ENCODE measurements at regions of chr10 and their contacts with region 1.

Region 1: DNA sequence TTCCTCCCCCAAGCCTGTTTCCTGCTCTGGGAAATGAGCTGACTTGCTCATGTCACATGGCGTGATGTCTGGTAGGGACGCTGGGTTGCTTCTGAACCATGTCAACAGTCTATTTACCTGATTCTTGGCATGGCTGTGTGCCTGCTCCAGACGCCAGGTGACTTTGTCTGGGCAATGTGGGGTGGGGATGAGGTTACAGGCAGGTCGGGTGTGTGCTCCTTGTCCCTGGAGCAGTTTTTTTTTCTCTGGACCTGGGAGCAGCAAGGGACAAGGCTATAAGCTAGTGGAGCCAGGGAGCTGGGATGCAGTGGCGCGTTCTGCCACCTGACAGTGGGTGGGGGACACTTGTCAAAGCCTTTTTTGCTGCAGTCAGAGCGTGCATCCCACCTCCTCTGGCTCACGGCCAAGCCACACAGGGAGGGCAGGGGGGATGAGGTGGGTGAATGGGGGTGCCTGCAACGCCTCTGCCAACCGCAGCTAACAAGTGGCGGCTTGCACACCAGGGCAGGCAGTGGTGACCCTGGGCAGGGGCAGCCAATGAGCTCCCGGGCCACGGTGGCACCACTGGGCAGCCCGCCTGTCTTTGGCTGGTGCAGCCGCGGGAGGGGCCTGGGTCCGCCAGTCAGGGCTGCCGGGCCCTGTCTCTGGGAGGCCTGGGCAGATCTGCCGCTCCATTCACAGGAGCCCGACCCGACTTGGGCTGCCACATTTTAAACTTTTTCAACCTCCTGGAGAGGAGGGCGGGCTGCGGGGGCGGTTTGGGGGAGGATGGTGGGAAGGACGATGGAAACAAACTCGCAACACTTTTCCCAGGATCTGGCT is 22.9 kb downstream of the DNAJB12 start:
- DNase-seq: peak; percentile 98
- H3K4me3 Mint-ChIP-seq: peak overlapping the region; percentile 76
- H3K27ac Mint-ChIP-seq: peak overlapping the region; percentile 100
- H3K4me1 Mint-ChIP-seq: peaks cover 87% of the 10 kb centered on the region
- H3K27me3 Mint-ChIP-seq: peaks cover 2% of the 10 kb centered on the region

Region 2: DNA sequence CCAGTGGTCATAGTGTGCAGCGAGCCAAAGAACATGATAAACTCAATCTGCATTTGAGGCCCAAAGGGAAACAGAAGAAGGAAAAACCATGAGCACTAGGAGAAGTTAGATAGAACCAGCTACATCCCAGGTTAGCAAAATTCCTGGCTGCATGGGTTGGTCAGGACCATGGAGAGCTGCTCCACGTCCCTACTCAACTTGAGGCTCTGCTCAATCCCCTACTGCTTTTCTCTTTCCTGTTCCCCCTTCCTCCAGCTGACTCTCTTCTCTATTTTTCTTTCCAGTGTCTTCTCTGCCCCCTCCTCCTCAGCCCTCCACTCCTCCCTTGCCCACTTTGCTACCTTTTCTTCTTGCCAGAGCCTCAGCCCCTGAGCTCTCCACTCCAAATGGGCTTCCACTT is 536.6 kb before region 1 on chr10:
- CTCF ChIA-PET with region 1: no interaction called
- intact Hi-C with region 1: no loop called
- DNase-seq: peak; percentile 42
- H3K4me3 Mint-ChIP-seq: no peak overlapping the region
- H3K27ac Mint-ChIP-seq: no peak overlapping the region
- H3K4me1 Mint-ChIP-seq: peaks cover 14% of the 10 kb centered on the region
- H3K27me3 Mint-ChIP-seq: no peaks in the 10 kb centered on the region

Region 3: GRCh38 chr10:71957546-71958275 is 374.1 kb before region 1 on chr10:
- CTCF ChIA-PET with region 1: interaction called, 5 read pairs
- intact Hi-C with region 1: loop called (anchors 5 kb)
- DNase-seq: no peak
- H3K4me3 Mint-ChIP-seq: no peak overlapping the region
- H3K27ac Mint-ChIP-seq: no peak overlapping the region
- H3K4me1 Mint-ChIP-seq: no peaks in the 10 kb centered on the region
- H3K27me3 Mint-ChIP-seq: peaks cover 9% of the 10 kb centered on the region

Region 4: DNA sequence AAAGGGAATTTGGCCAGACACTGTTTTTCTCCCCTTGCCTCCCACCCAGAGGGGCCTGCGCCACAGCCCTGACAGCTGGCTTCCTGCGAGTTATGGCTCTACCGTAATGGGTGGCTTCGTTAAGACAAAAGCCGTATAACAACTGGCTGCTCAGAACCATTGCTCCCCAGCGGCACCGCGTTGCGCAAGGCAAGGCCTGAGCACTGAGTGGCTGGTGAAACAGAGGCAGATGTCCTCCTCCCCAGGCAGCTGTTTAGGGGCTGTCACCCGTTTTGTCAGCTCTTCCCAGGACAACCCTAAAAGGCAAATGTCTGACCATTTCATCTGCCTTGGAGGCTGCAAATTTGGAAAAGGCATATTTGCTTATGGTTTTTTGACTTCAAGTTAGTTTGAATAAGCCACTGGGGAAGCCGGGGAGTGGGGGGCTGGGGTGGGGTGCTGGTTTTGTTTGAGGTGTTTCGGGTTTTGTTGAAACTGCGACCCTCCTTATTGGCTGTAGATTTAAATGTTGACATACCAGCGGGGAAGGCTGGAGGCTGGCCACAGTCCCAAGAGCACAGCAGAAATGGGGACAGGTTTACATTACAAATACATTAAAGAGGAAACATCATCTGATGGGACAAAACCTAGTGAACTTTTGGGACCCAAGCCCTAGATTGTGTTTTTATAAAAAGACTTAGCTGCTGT is 242.8 kb before region 1 on chr10:
- CTCF ChIA-PET with region 1: interaction called, 5 read pairs
- intact Hi-C with region 1: loop called (anchors 1 kb)
- DNase-seq: peak; percentile 81
- H3K4me3 Mint-ChIP-seq: peak overlapping the region; percentile 99
- H3K27ac Mint-ChIP-seq: peak overlapping the region; percentile 99
- H3K4me1 Mint-ChIP-seq: peaks cover 63% of the 10 kb centered on the region
- H3K27me3 Mint-ChIP-seq: no peaks in the 10 kb centered on the region

Region 5: DNA sequence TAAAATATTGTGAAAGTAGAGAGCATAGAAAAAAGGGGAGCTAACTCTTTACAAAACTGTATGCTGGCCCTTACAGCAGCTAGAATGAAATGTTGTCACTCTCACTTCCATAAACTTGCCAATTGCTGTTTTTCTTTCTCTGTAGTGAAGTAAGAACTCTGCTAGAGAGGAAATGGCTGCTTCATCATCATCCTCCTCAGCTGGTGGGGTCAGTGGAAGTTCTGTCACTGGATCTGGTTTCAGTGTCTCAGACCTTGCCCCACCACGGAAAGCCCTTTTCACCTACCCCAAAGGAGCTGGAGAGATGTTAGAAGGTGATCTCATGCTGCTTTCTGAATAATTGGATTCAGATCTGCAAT is 108.1 kb before region 1 on chr10:
- CTCF ChIA-PET with region 1: interaction called, 43 read pairs
- intact Hi-C with region 1: loop called (anchors 1 kb)
- DNase-seq: peak; percentile 44
- H3K4me3 Mint-ChIP-seq: no peak overlapping the region
- H3K27ac Mint-ChIP-seq: peak overlapping the region; percentile 89
- H3K4me1 Mint-ChIP-seq: peaks cover 63% of the 10 kb centered on the region
- H3K27me3 Mint-ChIP-seq: no peaks in the 10 kb centered on the region

Region 6: GRCh38 chr10:72273410-72274212 is 58.2 kb before region 1 on chr10 and contains the start of gene DDIT4:
- CTCF ChIA-PET with region 1: interaction called, 195 read pairs
- intact Hi-C with region 1: loop called (anchors 2 kb)
- DNase-seq: peak; percentile 99
- H3K4me3 Mint-ChIP-seq: peak within 1 kb of the TSS; percentile 96
- H3K27ac Mint-ChIP-seq: peak within 1 kb of the TSS; percentile 98
- H3K4me1 Mint-ChIP-seq: peaks cover 34% of the 10 kb centered on the region
- H3K27me3 Mint-ChIP-seq: no peaks in the 10 kb centered on the region
- total RNA-seq, gene DDIT4: 684 to 689 TPM

Region 7: DNA sequence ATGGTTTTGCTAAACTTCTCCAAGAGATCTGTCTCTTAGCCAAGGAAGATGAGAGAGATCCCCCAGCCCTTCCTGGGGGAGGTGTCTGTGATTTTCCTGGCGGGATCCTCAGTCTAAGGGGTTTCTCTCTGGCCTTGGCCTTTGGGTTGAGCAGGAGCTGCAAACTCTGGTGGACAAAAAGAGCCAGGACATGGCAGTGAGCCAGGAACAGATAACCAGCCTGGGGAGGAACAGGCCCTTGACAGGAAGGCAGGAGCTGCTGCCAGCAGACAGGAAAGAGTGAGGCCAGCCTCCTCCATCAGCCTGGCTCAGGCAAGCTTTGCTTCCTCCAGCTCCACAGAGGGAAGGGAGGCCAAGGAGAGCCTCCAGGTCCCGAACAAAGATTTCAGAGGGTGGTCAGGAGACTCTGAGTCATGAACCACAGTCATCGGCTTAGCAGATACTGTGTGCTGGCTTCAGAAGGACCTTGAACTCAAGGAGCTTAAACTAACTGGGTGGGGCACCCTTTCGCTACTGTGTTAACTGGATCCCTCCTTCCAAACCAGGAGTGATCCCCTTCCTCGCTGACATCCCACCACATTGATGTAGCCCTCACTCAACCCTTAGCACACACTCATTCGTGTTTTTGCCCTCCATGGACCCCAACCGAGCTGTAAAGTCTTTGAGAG is 23.4 kb before region 1 on chr10:
- CTCF ChIA-PET with region 1: interaction called, 8 read pairs
- intact Hi-C with region 1: loop called (anchors 1 kb)
- DNase-seq: peak; percentile 73
- H3K4me3 Mint-ChIP-seq: no peak overlapping the region
- H3K27ac Mint-ChIP-seq: peak overlapping the region; percentile 87
- H3K4me1 Mint-ChIP-seq: peaks cover 74% of the 10 kb centered on the region
- H3K27me3 Mint-ChIP-seq: no peaks in the 10 kb centered on the region